Heart left ventricle (tissue), 16 donors: ENCODE measurements at regions of chr5 and their contacts with region 1.

Region 1: GRCh38 chr5:6377905-6378765 is at the start of gene MED10:
- DNase-seq: peak; percentile 95 to 98 (median 97)
- ATAC-seq: peak; percentile 100
- H3K4me3 ChIP-seq: peak within 1 kb of the TSS; percentile 64 to 99 (median 98)
- H3K27ac ChIP-seq: peak within 1 kb of the TSS; percentile 60 to 95 (median 91)
- H3K4me1 ChIP-seq: peaks cover 0 to 26% (median 16%) of the 10 kb centered on the region in 12 donors
- H3K27me3 ChIP-seq: peaks cover 0 to 3% (median 0%) of the 10 kb centered on the region in 9 donors
- CTCF ChIP-seq: no peak
- POLR2A ChIP-seq: peak in 1 of 2 donors; percentile 73
- total RNA-seq, gene MED10: 13.2 to 30.7 (median 23.1) TPM

Region 2: DNA sequence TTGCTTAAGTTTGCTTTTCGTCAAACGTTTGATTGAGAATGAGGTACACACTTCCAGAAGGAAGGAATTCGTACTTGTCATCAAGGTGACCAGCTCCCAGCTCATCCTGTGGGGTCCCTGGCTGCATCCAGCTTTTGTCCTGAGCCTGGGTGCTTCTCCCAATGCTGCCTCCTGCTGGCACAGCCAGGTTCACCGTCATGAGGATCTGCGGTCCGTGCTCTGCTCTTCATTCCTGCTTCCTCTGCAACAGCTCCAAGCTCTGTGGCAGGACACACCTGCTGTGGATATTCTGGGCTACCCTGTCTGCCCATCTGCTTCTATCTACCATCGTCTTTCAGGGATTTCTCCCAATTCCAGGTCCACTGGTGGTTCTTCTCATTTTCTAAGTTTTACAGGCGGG is 57.2 kb after region 1 on chr5:
- intact Hi-C with region 1: loop called in 6 of 10 experiments (anchors 2 to 10 kb)
- DNase-seq: no peak
- ATAC-seq: no peak
- H3K4me3 ChIP-seq: no peak overlapping the region
- H3K27ac ChIP-seq: no peak overlapping the region
- H3K4me1 ChIP-seq: peaks cover 0 to 23% (median 7%) of the 10 kb centered on the region in 12 donors
- H3K27me3 ChIP-seq: no peaks in the 10 kb centered on the region
- CTCF ChIP-seq: peak in 11 of 12 donors; percentile 5 to 44 (median 23)
- POLR2A ChIP-seq: no peak

Region 3: GRCh38 chr5:6545770-6546690 is 167.9 kb after region 1 on chr5:
- intact Hi-C with region 1: loop called in 1 of 10 experiments (anchors 10 kb)
- DNase-seq: no peak
- ATAC-seq: peak in 2 of 4 donors; percentile 12 to 53
- H3K4me3 ChIP-seq: no peak overlapping the region
- H3K27ac ChIP-seq: peak overlapping the region in 8 of 12 donors; percentile 9 to 83 (median 54)
- H3K4me1 ChIP-seq: peaks cover 0 to 19% (median 0%) of the 10 kb centered on the region in 12 donors
- H3K27me3 ChIP-seq: no peaks in the 10 kb centered on the region
- CTCF ChIP-seq: no peak
- POLR2A ChIP-seq: no peak

Region 4: GRCh38 chr5:6603643-6604042 is 225.5 kb after region 1 on chr5:
- intact Hi-C with region 1: loop called in 1 of 10 experiments (anchors 10 kb)
- DNase-seq: peak in 3 of 5 donors; percentile 33 to 66 (median 64)
- ATAC-seq: peak in 3 of 4 donors; percentile 52 to 78 (median 57)
- H3K4me3 ChIP-seq: no peak overlapping the region
- H3K27ac ChIP-seq: no peak overlapping the region
- H3K4me1 ChIP-seq: peaks cover 0 to 4% (median 0%) of the 10 kb centered on the region in 12 donors
- H3K27me3 ChIP-seq: no peaks in the 10 kb centered on the region
- CTCF ChIP-seq: no peak
- POLR2A ChIP-seq: no peak

Region 5: DNA sequence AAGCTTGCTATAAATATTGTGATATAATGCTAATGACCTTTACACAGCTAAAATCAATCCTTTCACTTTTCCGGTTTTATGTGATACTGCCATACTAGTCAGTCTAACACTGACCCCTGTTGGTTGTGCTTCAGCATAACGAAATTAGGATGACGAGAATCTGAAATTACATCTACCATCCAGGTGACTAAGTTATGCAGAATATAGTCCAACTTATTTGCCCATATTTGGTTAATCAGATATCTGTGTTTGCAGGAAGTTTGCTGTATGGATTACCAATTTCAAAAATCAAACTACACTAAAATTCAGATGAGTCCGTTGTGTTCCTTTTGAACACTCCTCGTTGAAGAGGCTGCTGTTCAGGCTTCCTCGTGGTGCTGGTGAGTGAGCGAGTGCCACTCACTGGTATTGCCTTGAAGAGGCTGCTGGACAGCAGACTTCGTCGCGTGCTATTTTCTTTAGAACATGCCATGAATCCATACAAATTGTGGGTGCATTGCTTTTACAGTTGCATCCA is 367.6 kb after region 1 on chr5:
- intact Hi-C with region 1: loop called in 3 of 10 experiments (anchors 10 kb)
- DNase-seq: no peak
- ATAC-seq: peak; percentile 50 to 78 (median 58)
- H3K4me3 ChIP-seq: no peak overlapping the region
- H3K27ac ChIP-seq: peak overlapping the region in 6 of 12 donors; percentile 15 to 56 (median 26)
- H3K4me1 ChIP-seq: peaks cover 0 to 14% (median 8%) of the 10 kb centered on the region in 12 donors
- H3K27me3 ChIP-seq: no peaks in the 10 kb centered on the region
- CTCF ChIP-seq: peak; percentile 61 to 86 (median 76)
- POLR2A ChIP-seq: no peak